H1 (cell line): ENCODE measurements at regions of chr5 and their contacts with region 1.

Region 1: DNA sequence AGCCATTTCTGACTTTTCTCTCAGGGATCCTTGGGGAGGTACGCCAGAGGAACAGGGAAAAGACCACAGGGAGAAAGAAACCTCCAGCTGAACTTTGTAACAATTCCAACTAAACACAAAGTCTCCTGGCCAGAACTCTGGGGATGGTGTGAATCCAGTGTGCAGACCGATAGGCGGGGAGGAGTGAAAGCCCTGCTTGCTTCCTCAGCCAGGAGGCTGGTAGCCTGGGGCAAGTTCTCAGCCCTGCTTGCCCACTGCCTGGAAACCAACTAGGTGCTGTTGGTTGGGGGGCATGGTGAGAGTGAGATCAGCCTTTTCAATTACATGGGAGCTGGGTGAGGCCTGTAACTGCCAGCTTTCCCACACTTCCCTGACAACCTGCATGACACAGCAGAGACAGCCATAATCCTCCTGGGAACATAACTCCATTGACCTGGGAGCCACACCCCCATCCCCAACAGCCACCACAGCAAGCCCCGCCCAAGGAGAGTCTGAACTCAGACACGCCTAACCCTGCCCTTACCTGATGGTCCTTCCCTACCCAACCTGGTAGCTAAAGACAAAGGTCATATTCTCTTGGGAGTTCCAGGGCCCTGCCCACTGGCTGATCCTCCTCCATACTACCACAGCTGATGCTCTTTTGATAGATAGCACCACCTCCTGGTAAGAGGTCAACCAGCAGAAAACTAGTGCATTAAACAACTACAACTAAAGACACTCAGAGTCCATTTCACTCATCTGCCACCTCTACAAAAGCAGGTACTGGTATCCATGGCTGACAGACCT is 100.1 kb upstream of the TNFAIP8 start:
- DNase-seq: peak; percentile 64 to 74
- H3K4me3 ChIP-seq: no peak overlapping the region
- H3K27ac ChIP-seq: no peak overlapping the region; the same call in 1 of the 2 replicates
- H3K4me1 ChIP-seq: no peaks in the 10 kb centered on the region
- H3K27me3 ChIP-seq: no peaks in the 10 kb centered on the region
- CTCF ChIP-seq: peak; percentile 5 to 79 (median 70)
- EP300 ChIP-seq: no peak
- POLR2A ChIP-seq: no peak
- RAD21 ChIP-seq: peak; percentile 79 to 81

Region 2: GRCh38 chr5:119022017-119022745 is 233.6 kb before region 1 on chr5:
- CTCF ChIA-PET with region 1: interaction called, 19 read pairs
- POLR2A ChIA-PET with region 1: no interaction called
- DNase-seq: no peak
- H3K4me3 ChIP-seq: no peak overlapping the region
- H3K27ac ChIP-seq: no peak overlapping the region
- H3K4me1 ChIP-seq: no peaks in the 10 kb centered on the region
- H3K27me3 ChIP-seq: no peaks in the 10 kb centered on the region
- CTCF ChIP-seq: peak in 2 of 3 experiments; percentile 46 to 49; a peak in 2 of 4 replicates
- EP300 ChIP-seq: no peak
- POLR2A ChIP-seq: no peak
- RAD21 ChIP-seq: peak; percentile 85 to 86

Region 3: DNA sequence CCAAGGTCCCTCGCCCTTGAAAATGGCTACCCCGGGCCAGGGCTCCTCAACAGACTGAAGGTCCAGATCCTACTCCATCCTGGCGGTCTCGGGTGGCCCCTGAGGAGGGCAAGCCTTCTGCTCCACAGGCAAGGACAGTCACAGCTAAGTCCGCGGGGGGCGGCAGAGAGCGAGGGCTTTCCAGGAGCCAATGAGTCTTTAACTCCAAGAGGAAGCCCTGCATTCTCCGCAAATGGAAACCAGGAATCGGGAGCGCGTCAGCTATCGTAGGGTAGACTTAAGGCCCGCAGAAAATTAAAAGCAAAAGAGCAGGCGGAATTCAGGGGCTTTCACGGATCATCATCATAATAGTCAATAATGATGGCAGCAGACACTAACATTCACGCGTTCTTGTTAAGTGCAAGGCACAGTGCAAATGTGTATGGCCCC is 12.2 kb after region 1 on chr5:
- CTCF ChIA-PET with region 1: interaction called, 6 read pairs
- POLR2A ChIA-PET with region 1: interaction called, 12 read pairs
- DNase-seq: peak; percentile 89 to 90
- H3K4me3 ChIP-seq: peak overlapping the region; percentile 80 to 95 (median 84)
- H3K27ac ChIP-seq: peak overlapping the region; percentile 37; the same call in 1 of the 2 replicates
- H3K4me1 ChIP-seq: peaks cover 0 to 3% (median under 1%) of the 10 kb centered on the region in 4 experiments; a peak in 2 of 7 replicates
- H3K27me3 ChIP-seq: peaks cover 0 to 1% (median 0%) of the 10 kb centered on the region in 4 experiments; a peak in 2 of 7 replicates
- CTCF ChIP-seq: peak; percentile 36 to 68 (median 64)
- EP300 ChIP-seq: no peak
- POLR2A ChIP-seq: no peak
- RAD21 ChIP-seq: peak; percentile 14 to 39; a peak in 2 of 4 replicates